ENCODE measurements at regions of chr2 and their contacts with region 1.

Region 1: DNA sequence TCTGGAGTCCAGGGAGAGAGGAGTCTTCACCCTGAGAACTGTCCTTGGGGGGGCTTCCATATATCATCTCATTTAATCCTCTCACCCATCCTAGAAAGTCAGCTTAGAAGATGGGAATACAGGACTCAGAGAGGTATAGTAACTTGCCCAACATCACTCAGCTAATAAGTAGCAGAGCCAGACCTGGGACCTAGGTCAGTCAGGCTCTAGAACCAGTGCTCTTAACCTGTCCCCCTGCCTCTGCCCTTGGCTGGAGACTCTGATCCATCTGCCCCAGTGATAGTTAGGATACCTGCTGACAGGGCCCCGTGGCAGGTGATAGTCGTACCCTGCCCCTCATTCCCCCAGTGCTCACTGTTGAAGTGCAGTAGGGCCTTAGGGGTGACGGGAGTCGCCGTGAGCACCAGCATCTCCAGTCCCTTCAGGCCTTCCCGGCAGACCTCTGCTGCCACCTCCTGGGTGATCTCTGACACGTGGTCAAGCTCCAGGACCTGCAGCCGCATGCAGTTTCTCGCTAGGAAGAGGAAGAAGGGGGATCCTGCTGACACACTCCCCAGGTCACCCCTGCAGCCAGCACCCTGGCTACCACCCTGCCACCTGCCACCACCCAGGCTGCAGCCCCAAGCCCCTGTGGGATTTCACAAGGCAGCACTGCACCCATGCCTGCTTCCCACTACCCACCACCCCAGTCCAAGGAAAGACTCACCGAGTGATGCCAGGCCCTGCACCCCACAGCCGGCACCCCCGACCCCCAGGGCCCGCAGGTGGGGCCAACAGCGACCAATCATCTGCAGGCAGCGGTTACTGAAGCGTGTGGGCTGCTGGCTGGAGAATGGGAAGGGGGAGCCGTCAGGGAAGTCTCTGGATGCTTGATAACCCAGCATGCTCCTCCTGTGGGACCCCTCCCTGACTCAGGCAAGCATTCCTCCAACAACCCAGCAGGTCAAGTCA is 24.0 kb downstream of the FBXO41 start:
- DNase-seq: peak; percentile 72
- ATAC-seq: peak; percentile 65
- H3K4me3 ChIP-seq: no peak overlapping the region
- H3K27ac ChIP-seq: no peak overlapping the region
- H3K4me1 ChIP-seq: peaks cover 51% of the 10 kb centered on the region
- H3K27me3 ChIP-seq: no peaks in the 10 kb centered on the region
- CTCF ChIP-seq: peak; percentile 96
- EP300 ChIP-seq: no peak
- POLR2A ChIP-seq: no peak
- RAD21 ChIP-seq: peak; percentile 89

Region 2: GRCh38 chr2:73163483-73164367 is 96.6 kb before region 1 on chr2:
- CTCF ChIA-PET with region 1: no interaction called
- POLR2A ChIA-PET with region 1: no interaction called
- in situ Hi-C with region 1: no loop called
- intact Hi-C with region 1: loop called (anchors 5 kb)
- DNase-seq: peak; percentile 71
- ATAC-seq: peak; percentile 92
- H3K4me3 ChIP-seq: no peak overlapping the region
- H3K27ac ChIP-seq: no peak overlapping the region
- H3K4me1 ChIP-seq: no peaks in the 10 kb centered on the region
- H3K27me3 ChIP-seq: peaks cover 4 to 8% of the 10 kb centered on the region in 2 experiments; a peak in 4 of 5 replicates
- CTCF ChIP-seq: peak; percentile 89
- EP300 ChIP-seq: no peak
- POLR2A ChIP-seq: no peak
- RAD21 ChIP-seq: peak; percentile 90

Region 3: GRCh38 chr2:73290049-73290839 is 29.9 kb after region 1 on chr2:
- CTCF ChIA-PET with region 1: no interaction called
- POLR2A ChIA-PET with region 1: no interaction called
- in situ Hi-C with region 1: no loop called
- intact Hi-C with region 1: loop called (anchors 2 kb)
- DNase-seq: peak; percentile 61
- ATAC-seq: peak; percentile 53
- H3K4me3 ChIP-seq: no peak overlapping the region
- H3K27ac ChIP-seq: no peak overlapping the region
- H3K4me1 ChIP-seq: peaks cover 10% of the 10 kb centered on the region; the same call in 1 of the 2 replicates
- H3K27me3 ChIP-seq: peaks cover 9 to 45% of the 10 kb centered on the region in 2 experiments; a peak in 4 of 5 replicates
- CTCF ChIP-seq: peak; percentile 86
- EP300 ChIP-seq: no peak
- POLR2A ChIP-seq: no peak
- RAD21 ChIP-seq: peak; percentile 59; the same call in 1 of the 2 replicates